Natural killer cell (primary cell): ENCODE measurements at regions of chr17 and their contacts with region 1.

Region 1: DNA sequence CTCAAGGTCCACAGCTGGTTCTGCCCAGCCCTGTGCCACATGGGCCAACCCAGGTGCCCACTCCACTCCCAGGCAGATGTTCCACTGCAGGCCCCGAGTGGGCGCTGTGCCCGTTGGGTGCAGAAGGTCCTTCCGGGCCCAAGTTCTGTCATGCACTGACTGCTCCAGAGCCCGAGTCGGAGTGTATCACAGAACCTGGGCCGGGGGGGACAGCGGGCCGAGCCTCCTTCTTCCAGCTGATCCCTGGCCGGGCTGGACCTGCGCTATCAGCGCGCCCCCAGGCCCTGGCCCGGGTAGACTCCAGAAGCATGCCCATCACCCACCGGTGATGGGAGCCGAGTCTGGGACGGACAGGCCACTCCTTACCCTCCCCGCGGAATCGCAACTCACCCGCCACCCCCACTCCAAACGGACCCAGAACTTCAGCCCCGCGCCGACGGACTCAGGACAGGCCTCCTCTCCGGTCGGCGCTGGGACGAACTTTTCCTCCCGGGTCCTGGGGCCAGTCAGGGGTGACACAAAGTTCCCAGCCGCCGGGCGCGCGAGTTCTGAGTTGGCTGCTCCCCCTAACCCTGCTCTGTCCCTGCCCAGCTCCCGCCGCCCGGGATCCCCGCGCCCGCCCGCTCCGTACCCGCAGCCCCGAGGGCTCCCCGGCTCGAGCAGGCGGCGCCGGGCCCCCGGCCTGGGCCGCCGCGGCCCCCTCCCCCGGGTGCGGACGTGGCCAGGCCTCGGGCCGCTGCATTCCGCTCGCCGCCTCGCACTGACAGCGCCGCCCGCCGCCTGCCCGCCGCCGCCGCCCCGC is at the start of gene COPZ2:
- DNase-seq: peak; percentile 67 to 83
- ATAC-seq: peak; percentile 92 to 97 (median 96)
- H3K4me3 ChIP-seq: peak within 1 kb of the TSS; percentile 84
- H3K4me3 Mint-ChIP-seq: peak within 1 kb of the TSS; percentile 94
- H3K27ac ChIP-seq: no peak within 1 kb of the TSS
- H3K27ac Mint-ChIP-seq: peak within 1 kb of the TSS; percentile 50 to 82
- H3K4me1 ChIP-seq: peaks cover 14% of the 10 kb centered on the region
- H3K4me1 Mint-ChIP-seq: peaks cover 9 to 10% of the 10 kb centered on the region in 2 donors
- H3K27me3 ChIP-seq: peaks cover 4% of the 10 kb centered on the region
- H3K27me3 Mint-ChIP-seq: peaks cover 0 to 17% of the 10 kb centered on the region in 2 donors
- CTCF ChIP-seq: peak; percentile 89
- total RNA-seq, gene COPZ2: 15.9 to 19.1 (median 16.5) TPM

Region 2: GRCh38 chr17:48074315-48075081 is 37.3 kb after region 1 on chr17:
- intact Hi-C with region 1: loop called (anchors 1 kb)
- DNase-seq: peak; percentile 57 to 86
- ATAC-seq: peak; percentile 78 to 92 (median 86)
- H3K4me3 ChIP-seq: no peak overlapping the region
- H3K4me3 Mint-ChIP-seq: no peak overlapping the region
- H3K27ac ChIP-seq: no peak overlapping the region
- H3K27ac Mint-ChIP-seq: no peak overlapping the region
- H3K4me1 ChIP-seq: no peaks in the 10 kb centered on the region
- H3K4me1 Mint-ChIP-seq: no peaks in the 10 kb centered on the region
- H3K27me3 ChIP-seq: no peaks in the 10 kb centered on the region
- H3K27me3 Mint-ChIP-seq: no peaks in the 10 kb centered on the region
- CTCF ChIP-seq: peak; percentile 82